ENCODE measurements at regions of chr6 and their contacts with region 1.

Region 1: DNA sequence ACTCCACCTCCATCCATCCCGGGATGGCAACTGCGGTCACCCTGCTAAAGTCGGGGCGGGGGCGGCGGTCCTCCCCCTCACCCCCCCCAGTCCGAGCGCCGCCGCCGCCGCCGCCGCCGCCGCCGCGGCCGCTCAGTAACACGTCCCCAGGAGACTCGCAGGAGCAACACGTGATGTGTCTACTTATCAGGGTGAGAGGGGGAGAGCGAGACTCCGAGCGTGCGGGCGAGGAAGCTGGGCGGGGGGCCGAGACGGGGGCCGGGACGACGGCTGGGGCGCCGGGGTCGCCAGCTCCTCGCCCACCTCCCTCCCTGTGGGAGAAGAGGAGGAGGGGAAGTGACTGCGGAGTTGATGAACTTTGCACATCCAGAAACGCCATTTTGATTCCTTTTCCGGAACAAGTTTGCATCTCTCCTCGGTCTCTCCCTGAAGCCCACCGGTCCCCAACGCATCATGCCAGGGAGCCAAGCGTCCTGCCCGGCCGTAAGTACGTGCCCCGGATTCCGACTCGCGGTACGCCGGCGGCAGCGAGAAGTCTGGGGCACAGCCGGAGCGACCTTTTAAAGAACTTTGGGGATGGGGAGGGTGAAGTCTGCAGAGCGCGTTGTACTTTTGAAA is at the start of gene RREB1:
- DNase-seq: peak; percentile 69 to 79 (median 77)
- ATAC-seq: peak in 3 of 4 donors; percentile 69 to 77 (median 77)
- H3K4me3 ChIP-seq: peak within 1 kb of the TSS; percentile 71 to 99 (median 96)
- H3K27ac ChIP-seq: peak within 1 kb of the TSS; percentile 88 to 99 (median 96)
- H3K4me1 ChIP-seq: peaks cover 0 to 44% (median 29%) of the 10 kb centered on the region in 12 donors
- H3K27me3 ChIP-seq: no peaks in the 10 kb centered on the region
- CTCF ChIP-seq: no peak
- POLR2A ChIP-seq: peak in 1 of 2 donors; percentile 29
- total RNA-seq, gene RREB1: 28.6 to 49.4 (median 40.1) TPM

Region 2: DNA sequence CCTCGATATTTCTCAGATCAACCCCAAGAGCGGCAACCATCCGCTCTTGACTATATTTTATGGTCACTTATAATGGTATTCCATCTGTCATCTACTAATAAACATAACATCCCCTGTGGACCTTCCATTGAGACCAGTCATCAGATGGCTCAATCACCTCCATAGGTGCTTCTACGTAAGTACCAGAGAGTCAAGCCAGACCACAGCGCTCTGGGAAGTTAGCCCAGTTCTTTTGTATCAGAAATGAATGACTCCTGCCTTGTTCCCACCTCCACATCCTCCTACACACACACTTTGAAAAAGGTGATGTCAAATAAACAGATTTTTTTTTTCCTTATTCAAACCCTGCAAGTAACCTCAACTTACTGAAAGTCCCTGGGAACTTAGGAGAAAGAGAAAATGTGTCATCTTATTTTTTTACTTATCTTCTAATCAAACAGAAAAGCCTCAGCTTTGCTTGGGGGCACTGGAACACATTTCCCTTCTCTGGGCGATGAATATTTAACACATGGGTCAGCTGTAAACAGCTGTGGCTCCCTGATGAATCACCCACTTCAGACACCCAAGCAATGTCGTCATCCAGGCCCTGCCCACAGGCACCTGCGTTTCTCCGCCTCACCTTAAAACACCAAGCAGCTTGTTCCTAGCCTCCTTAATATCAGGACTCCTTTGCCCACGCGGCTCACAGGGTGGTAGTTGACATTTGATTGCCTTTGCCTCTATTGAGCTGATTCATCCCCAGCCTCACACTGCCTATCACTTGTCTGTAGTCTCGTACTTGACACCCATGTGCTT is 640.5 kb before region 1 on chr6:
- intact Hi-C with region 1: no loop called
- DNase-seq: no peak
- ATAC-seq: no peak
- H3K4me3 ChIP-seq: no peak overlapping the region
- H3K27ac ChIP-seq: no peak overlapping the region
- H3K4me1 ChIP-seq: no peaks in the 10 kb centered on the region
- H3K27me3 ChIP-seq: no peaks in the 10 kb centered on the region
- CTCF ChIP-seq: no peak
- POLR2A ChIP-seq: no peak

Region 3: DNA sequence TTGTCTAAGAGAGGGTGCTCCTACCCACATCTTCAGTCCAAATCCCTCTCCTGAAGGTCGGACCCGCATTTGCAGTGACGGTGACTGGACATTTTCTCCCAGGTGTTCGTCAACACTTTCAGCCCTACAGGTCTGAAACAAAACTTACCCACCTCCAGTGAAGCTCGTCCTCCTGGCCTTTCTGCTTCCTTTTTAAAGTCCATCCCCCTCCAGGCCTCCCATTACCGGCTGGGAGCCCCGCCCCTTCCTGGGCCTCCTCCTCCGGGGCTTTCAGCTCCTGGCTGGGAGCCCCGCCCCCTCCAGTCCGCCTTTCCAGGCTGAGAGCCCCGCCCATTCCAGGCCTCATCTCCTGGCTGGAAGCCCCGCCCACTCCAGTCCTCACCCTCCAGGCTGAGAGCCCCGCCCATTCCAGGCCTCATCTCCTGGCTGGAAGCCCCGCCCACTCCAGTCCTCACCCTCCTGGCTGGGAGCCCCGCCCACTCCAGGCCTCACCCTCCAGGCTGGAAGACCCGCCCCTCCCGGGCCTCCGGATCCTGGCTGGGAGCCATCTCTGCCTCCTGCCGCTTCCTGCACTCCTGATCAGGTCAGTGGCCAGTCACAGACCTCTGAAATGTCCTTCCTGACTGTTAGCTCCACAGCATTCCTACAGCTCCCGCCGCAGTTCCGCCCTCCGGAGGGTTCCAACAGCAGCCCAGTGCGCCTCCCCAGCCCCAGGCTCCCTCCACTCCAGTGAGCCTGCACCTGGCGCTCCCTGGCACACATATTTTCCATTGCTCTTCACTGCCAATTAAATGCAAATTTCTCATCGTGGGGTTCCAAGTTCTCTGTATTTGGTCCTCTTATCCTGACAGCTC is 420.7 kb before region 1 on chr6:
- intact Hi-C with region 1: loop called in 1 of 10 experiments (anchors 5 kb)
- DNase-seq: peak; percentile 94 to 97 (median 96)
- ATAC-seq: peak; percentile 90 to 95 (median 91)
- H3K4me3 ChIP-seq: peak overlapping the region in 10 of 12 donors; percentile 27 to 46 (median 38)
- H3K27ac ChIP-seq: peak overlapping the region; percentile 48 to 90 (median 84)
- H3K4me1 ChIP-seq: peaks cover 6 to 80% (median 37%) of the 10 kb centered on the region in 12 donors
- H3K27me3 ChIP-seq: no peaks in the 10 kb centered on the region
- CTCF ChIP-seq: no peak
- POLR2A ChIP-seq: peak in 1 of 2 donors; percentile 21

Region 4: GRCh38 chr6:6758915-6759654 is 348.6 kb before region 1 on chr6:
- intact Hi-C with region 1: loop called in 1 of 10 experiments (anchors 10 kb)
- DNase-seq: peak in 4 of 5 donors; percentile 53 to 79 (median 72)
- ATAC-seq: peak; percentile 74 to 96 (median 90)
- H3K4me3 ChIP-seq: peak overlapping the region in 6 of 12 donors; percentile 13 to 34 (median 22)
- H3K27ac ChIP-seq: peak overlapping the region in 9 of 12 donors; percentile 10 to 75 (median 61)
- H3K4me1 ChIP-seq: peaks cover 0 to 17% (median 9%) of the 10 kb centered on the region in 12 donors
- H3K27me3 ChIP-seq: no peaks in the 10 kb centered on the region
- CTCF ChIP-seq: peak; percentile 42 to 72 (median 54)
- POLR2A ChIP-seq: no peak

Region 5: DNA sequence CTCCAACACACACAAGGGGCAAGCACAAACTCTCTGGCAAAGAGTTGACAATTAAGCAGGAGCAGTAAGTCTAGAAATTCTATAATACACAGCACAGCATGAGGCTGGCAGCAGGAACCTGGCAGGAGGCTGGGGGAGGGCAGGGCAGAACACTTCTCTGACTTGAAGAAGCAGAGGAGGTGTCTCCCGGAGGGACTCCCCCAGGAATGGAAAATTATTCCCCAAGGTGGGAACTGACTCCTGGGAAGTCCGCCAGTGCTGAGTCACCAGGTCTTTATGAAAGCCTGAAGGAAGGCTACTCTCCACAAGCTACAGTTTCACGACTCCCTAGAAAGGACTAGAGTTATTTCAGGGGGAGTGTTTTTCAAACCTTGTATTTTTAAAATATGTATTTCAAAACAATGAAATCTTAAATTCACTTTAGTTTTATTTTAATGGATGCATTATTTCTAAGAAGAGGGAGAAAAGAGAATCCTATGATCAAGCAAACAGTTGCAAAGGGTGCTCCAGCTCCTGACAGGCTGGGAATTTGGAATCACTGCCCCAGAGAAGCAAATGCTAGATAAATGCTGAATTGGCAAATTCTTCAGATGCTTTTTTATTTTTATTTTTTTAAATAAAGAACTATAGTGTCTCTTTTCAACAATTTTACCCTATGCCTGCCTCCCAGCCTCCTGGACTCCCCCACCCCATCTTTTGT is 326.4 kb before region 1 on chr6:
- intact Hi-C with region 1: no loop called
- DNase-seq: peak in 2 of 5 donors; percentile 39 to 62
- ATAC-seq: peak in 2 of 4 donors; percentile 57 to 82
- H3K4me3 ChIP-seq: no peak overlapping the region
- H3K27ac ChIP-seq: no peak overlapping the region
- H3K4me1 ChIP-seq: peaks cover 0 to 16% (median 5%) of the 10 kb centered on the region in 12 donors
- H3K27me3 ChIP-seq: no peaks in the 10 kb centered on the region
- CTCF ChIP-seq: no peak
- POLR2A ChIP-seq: no peak

Region 6: GRCh38 chr6:6998194-6998569 is 109.5 kb before region 1 on chr6:
- intact Hi-C with region 1: loop called in 1 of 10 experiments (anchors 5 kb)
- DNase-seq: no peak
- ATAC-seq: no peak
- H3K4me3 ChIP-seq: no peak overlapping the region
- H3K27ac ChIP-seq: no peak overlapping the region
- H3K4me1 ChIP-seq: peaks cover 0 to 28% (median 6%) of the 10 kb centered on the region in 12 donors
- H3K27me3 ChIP-seq: no peaks in the 10 kb centered on the region
- CTCF ChIP-seq: no peak
- POLR2A ChIP-seq: no peak

Region 7: DNA sequence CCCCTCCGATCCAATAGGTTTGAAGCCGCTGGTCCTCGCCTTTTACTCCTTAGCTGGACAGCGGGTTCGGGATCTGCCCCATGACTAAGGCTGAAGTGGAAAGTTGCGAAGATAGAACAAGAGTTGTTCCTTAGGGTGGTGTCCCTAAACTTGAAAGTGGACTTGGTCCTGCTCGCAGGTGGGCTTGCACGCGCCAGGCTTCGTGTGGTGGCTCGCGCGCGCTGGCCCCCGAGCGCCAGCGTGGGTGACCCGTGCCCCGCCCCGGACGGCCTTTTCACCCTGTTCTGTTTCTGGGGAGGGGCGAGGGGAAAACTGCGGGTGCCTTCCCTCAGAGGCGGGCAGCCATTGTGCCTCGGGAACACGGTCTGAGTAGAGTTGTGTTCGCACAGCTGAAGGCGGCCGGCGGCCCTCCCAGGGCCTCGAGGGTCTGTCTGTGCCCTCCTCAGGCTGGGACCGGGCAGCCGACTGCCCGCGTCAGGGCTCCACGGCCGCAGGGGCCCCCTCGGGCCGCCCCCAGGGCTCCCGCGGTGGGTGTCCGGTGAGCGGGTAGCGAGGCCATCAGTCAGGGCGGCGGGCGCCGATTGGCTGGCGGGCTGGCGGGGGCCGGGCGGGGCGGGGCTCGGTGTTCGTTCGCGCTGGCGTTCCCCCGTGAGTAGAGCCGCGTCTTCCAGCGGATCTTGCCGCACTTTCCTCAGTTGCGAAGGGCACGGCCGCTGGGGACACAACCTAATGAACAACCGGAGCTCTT is 33.1 kb after region 1 on chr6:
- intact Hi-C with region 1: loop called in 6 of 10 experiments (anchors 2 to 5 kb)
- DNase-seq: peak; percentile 92 to 94 (median 92)
- ATAC-seq: peak; percentile 82 to 97 (median 95)
- H3K4me3 ChIP-seq: peak overlapping the region; percentile 22 to 83 (median 67)
- H3K27ac ChIP-seq: peak overlapping the region; percentile 87 to 96 (median 94)
- H3K4me1 ChIP-seq: peaks cover 4 to 90% (median 66%) of the 10 kb centered on the region in 12 donors
- H3K27me3 ChIP-seq: no peaks in the 10 kb centered on the region
- CTCF ChIP-seq: no peak
- POLR2A ChIP-seq: peak in 1 of 2 donors; percentile 87

Region 8: DNA sequence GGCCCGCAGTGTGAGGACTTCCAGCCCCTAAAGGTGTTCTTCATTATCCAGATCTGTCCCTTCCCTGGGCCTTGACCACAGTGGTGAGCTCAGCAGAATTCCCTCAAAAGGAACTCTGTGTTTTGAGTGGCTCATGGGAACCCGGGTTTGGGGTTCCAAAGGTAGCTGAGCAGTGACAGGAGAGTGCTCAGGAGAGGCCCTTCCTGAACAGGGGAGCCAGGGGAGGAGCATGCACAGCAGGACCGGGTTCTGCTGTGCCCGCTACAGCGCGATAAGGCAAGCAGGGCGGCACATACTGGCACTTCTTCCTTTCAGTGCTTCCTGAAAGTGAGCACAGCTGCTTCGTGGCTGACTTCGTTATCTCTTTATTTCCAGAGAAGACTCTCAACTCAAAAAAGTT is 117.0 kb after region 1 on chr6:
- intact Hi-C with region 1: loop called in 6 of 10 experiments (anchors 5 to 10 kb)
- DNase-seq: peak in 1 of 5 donors; percentile 76
- ATAC-seq: peak; percentile 55 to 87 (median 74)
- H3K4me3 ChIP-seq: no peak overlapping the region
- H3K27ac ChIP-seq: peak overlapping the region in 11 of 12 donors; percentile 15 to 85 (median 45)
- H3K4me1 ChIP-seq: peaks cover 4 to 42% (median 35%) of the 10 kb centered on the region in 12 donors
- H3K27me3 ChIP-seq: no peaks in the 10 kb centered on the region
- CTCF ChIP-seq: no peak
- POLR2A ChIP-seq: no peak

Measured in heart left ventricle (tissue), 16 donors.